ENCODE measurements at regions of chr17 and their contacts with region 1.

Region 1: DNA sequence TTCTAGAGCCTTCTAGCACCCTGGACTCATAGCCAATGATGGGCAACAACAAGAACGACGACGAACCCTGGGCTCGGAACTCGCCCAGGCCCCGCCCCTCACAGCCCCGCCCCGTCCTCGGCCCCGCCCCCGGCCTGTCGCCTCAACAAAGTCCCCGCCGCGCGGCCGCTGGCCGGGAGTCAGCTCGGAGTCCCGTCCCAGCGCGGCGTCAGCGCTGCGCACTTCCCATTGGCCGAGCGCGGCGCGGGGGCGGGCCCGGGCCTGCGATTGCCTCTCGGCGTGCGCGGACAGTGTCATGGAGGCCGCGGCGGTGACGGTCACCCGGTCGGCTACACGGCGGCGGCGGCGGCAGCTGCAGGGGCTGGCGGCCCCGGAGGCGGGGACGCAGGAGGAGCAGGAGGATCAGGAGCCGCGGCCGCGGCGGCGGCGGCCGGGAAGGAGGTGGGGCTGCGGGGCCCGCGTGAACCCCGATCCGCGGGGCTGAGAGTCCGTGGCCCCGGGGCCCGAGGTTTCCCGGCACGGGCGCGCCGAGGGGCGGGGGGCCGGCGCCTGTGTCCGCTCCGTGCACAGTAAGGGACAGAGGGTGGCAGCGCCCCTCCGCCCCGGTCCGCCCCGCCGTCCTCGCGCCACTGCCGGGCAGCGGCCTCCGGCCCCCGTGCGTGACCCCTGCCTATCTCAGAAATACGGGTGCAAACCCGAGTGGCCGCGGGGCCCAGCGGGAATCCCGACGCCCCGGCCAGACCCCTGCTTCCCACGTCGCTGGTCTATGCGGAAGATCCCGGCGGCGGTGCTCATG is at the start of gene ENGASE:
- DNase-seq: peak; percentile 93 to 98
- H3K4me3 ChIP-seq: peak within 1 kb of the TSS; percentile 81
- H3K4me3 Mint-ChIP-seq: peak within 1 kb of the TSS; percentile 83
- H3K27ac Mint-ChIP-seq: peak within 1 kb of the TSS; percentile 43
- H3K4me1 ChIP-seq: peaks cover 26% of the 10 kb centered on the region
- H3K4me1 Mint-ChIP-seq: peaks cover 24% of the 10 kb centered on the region
- H3K27me3 ChIP-seq: no peaks in the 10 kb centered on the region
- H3K27me3 Mint-ChIP-seq: no peaks in the 10 kb centered on the region
- CTCF ChIP-seq: no peak
- total RNA-seq, gene ENGASE: 50.0 and 52.5 TPM in 2 replicates

Region 2: GRCh38 chr17:79009397-79010308 is 65.2 kb before region 1 on chr17 and contains the start of gene CANT1:
- CTCF ChIA-PET with region 1: interaction called, 5 read pairs
- POLR2A ChIA-PET with region 1: no interaction called
- intact Hi-C with region 1: loop called (anchors 2 kb)
- DNase-seq: peak; percentile 83 to 93
- H3K4me3 ChIP-seq: peak within 1 kb of the TSS; percentile 91
- H3K4me3 Mint-ChIP-seq: peak within 1 kb of the TSS; percentile 95
- H3K27ac Mint-ChIP-seq: peak within 1 kb of the TSS; percentile 92
- H3K4me1 ChIP-seq: peaks cover 39% of the 10 kb centered on the region
- H3K4me1 Mint-ChIP-seq: peaks cover 38% of the 10 kb centered on the region
- H3K27me3 ChIP-seq: no peaks in the 10 kb centered on the region
- H3K27me3 Mint-ChIP-seq: no peaks in the 10 kb centered on the region
- CTCF ChIP-seq: no peak
- total RNA-seq, gene CANT1: 68.9 and 86.4 TPM in 2 replicates

Region 3: GRCh38 chr17:79027925-79028813 is 46.7 kb before region 1 on chr17:
- CTCF ChIA-PET with region 1: interaction called, 9 read pairs
- POLR2A ChIA-PET with region 1: interaction called, 11 read pairs
- intact Hi-C with region 1: no loop called
- DNase-seq: peak in 1 of 2 experiments; percentile 31
- H3K4me3 ChIP-seq: no peak overlapping the region
- H3K4me3 Mint-ChIP-seq: peak overlapping the region; percentile 67
- H3K27ac Mint-ChIP-seq: peak overlapping the region; percentile 98
- H3K4me1 ChIP-seq: peaks cover 41% of the 10 kb centered on the region
- H3K4me1 Mint-ChIP-seq: peaks cover 34% of the 10 kb centered on the region
- H3K27me3 ChIP-seq: no peaks in the 10 kb centered on the region
- H3K27me3 Mint-ChIP-seq: no peaks in the 10 kb centered on the region
- CTCF ChIP-seq: no peak

Region 4: DNA sequence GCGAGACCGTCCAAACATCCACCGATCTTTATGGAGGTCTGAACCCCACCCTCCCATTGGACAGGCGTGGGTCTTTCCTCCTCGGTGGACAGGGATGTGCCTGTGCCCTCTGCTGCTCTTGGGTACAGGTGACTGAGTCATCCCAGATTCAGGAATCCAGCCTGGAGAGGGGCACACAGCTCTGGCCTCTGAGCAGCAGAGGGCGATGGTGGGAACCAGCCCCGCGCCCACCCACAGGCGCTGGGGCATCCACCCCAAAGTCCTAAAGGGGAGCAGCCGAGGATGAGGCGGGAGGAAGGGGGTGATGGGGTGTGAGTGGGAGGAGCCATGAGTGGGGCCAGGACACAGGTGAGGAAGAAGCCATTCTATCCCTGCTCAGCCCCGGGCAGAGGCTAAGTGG is 34.7 kb after region 1 on chr17:
- CTCF ChIA-PET with region 1: no interaction called
- POLR2A ChIA-PET with region 1: no interaction called
- intact Hi-C with region 1: no loop called
- DNase-seq: no peak
- H3K4me3 ChIP-seq: no peak overlapping the region
- H3K4me3 Mint-ChIP-seq: no peak overlapping the region
- H3K27ac Mint-ChIP-seq: no peak overlapping the region
- H3K4me1 ChIP-seq: no peaks in the 10 kb centered on the region
- H3K4me1 Mint-ChIP-seq: no peaks in the 10 kb centered on the region
- H3K27me3 ChIP-seq: no peaks in the 10 kb centered on the region; the same call in 1 of the 2 replicates
- H3K27me3 Mint-ChIP-seq: peaks cover 16% of the 10 kb centered on the region
- CTCF ChIP-seq: peak; percentile 31 to 66

Region 5: DNA sequence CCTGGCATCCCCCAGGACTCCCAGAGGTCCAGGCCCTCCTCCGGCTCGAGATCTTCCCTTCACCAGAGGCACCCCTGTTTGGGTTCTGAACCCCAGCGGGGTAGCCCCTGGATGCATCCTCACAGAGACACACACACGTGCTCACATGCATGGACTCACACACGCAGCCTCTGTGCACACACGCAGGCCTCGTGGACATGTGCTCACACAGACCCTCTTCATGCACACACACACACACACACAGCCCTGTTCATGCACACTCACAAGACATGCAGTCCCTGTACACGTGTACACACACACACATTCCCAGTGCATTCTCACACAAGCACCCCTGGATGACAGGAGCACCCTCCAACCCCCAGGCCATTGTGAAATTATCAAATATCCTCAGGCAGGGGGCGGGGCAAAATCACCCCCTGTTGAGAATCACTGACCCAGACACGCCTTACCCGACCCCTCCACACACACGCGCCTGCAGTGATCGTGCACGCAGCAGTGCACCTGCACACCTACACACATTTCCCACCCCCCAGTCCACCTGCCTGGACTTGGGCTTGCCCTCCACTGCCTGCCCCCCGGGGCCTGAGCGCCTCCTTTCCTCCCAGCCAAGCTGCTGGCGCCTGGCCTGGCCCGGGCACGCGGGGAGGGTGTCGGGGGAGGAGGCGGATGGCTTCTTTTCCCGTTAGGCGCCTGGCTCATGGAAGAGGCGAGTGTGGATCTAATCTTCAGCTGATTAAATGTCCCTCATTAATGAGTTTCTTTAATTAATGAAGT is 62.4 kb after region 1 on chr17:
- CTCF ChIA-PET with region 1: no interaction called
- POLR2A ChIA-PET with region 1: no interaction called
- intact Hi-C with region 1: no loop called
- DNase-seq: no peak
- H3K4me3 ChIP-seq: no peak overlapping the region
- H3K4me3 Mint-ChIP-seq: no peak overlapping the region
- H3K27ac Mint-ChIP-seq: no peak overlapping the region
- H3K4me1 ChIP-seq: no peaks in the 10 kb centered on the region
- H3K4me1 Mint-ChIP-seq: no peaks in the 10 kb centered on the region
- H3K27me3 ChIP-seq: peaks cover 7% of the 10 kb centered on the region
- H3K27me3 Mint-ChIP-seq: peaks cover 43% of the 10 kb centered on the region
- CTCF ChIP-seq: no peak

Measured in Caco-2 (cell line).